SK-N-SH (cell line): ENCODE measurements at regions of chr12 and their contacts with region 1.

Region 1: DNA sequence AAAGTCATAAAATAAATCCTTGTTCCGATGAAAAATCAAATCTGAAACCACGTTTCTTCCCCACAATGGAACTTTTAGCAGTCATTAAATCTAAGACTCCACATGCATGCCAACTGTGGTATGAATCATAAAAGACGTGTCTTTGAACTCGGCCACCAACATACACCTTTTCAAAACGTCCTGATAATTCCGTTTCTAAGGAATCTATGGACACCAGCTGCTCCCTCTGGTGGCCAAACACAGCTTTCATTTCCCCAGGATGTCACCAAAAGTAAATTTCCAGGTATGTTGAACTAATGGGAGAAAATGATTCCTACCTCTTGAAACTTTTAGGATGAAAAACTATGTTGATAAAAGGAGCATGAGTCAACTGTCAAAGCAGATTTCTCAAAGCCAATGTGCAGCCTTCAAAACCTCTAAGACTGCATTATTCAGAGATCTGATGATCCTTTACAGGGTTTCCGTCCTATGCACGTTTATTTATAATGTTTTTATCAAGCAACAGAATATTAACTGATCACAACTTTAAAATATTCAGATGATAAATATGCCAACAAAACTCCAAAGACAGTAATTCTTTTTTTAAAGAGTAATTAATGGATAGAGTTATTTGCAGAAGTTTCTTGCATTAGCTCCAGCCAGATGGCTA is 96.2 kb downstream of the CIT start:
- DNase-seq: peak; percentile 59
- H3K4me3 ChIP-seq: peak overlapping the region in 1 of 2 experiments; percentile 17; a peak in 1 of 4 replicates
- H3K27ac ChIP-seq: no peak overlapping the region
- H3K4me1 ChIP-seq: no peaks in the 10 kb centered on the region
- H3K27me3 ChIP-seq: no peaks in the 10 kb centered on the region
- CTCF ChIP-seq: peak; percentile 93
- EP300 ChIP-seq: no peak
- RAD21 ChIP-seq: peak; percentile 64

Region 2: DNA sequence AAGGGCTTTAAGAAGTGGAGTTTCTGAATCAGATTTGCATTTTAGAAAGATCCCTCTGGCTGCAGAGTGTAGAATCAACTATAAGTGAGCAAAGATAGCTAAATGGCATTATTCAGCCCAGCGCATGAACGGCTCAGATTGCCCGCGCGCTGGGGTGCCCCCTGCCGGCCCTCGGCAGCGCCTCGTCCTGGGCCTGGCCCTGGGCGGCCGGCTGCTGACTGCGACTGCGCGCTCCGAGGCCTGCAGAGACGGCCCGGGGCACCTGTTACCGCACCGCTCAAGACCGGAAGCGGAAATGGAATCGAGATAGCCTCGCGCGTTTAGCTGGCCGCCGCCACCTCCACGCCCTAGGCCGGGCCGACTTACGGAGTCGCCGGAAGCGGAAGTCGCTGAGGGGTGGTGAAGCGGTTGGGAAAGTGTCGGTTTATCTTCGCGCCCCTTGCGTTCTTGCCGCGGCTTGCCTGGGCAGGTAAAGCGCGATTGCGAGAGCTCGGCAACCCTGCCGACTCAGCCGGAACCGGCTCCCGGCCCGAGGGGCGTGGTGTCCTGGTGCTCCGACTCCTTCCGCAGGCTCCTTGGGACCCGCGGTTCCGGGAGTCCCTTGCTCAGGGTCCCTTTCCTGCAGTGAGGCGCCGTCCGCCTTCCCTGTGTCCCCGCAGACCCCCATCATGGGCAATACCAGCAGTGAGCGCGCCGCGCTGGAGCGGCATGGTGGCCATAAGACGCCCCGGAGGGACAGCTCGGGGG is 113.2 kb before region 1 on chr12 and contains the start of gene PRKAB1:
- CTCF ChIA-PET with region 1: interaction called, 16 read pairs
- POLR2A ChIA-PET with region 1: no interaction called
- DNase-seq: peak; percentile 98
- H3K4me3 ChIP-seq: peak within 1 kb of the TSS; percentile 84 to 99
- H3K27ac ChIP-seq: peak within 1 kb of the TSS; percentile 76 to 94
- H3K4me1 ChIP-seq: peaks cover 6 to 7% of the 10 kb centered on the region in 2 experiments; a peak in 3 of 4 replicates
- H3K27me3 ChIP-seq: no peaks in the 10 kb centered on the region
- CTCF ChIP-seq: peak; percentile 94
- EP300 ChIP-seq: no peak; a peak in 1 of 4 replicates
- RAD21 ChIP-seq: peak; percentile 55
- polyA plus RNA-seq, gene PRKAB1: 28.9 and 41.8 TPM in 2 replicates

Region 3: GRCh38 chr12:119749666-119750065 is 31.2 kb before region 1 on chr12:
- CTCF ChIA-PET with region 1: interaction called, 13 read pairs
- POLR2A ChIA-PET with region 1: no interaction called
- DNase-seq: peak; percentile 10
- H3K4me3 ChIP-seq: no peak overlapping the region
- H3K27ac ChIP-seq: peak overlapping the region in 1 of 2 experiments; percentile 34; a peak in 1 of 4 replicates
- H3K4me1 ChIP-seq: peaks cover 0 to 3% of the 10 kb centered on the region in 2 experiments; a peak in 1 of 4 replicates
- H3K27me3 ChIP-seq: no peaks in the 10 kb centered on the region
- CTCF ChIP-seq: no peak
- EP300 ChIP-seq: no peak
- RAD21 ChIP-seq: no peak

Region 4: GRCh38 chr12:119804011-119804641 is 23.2 kb after region 1 on chr12:
- CTCF ChIA-PET with region 1: interaction called, 58 read pairs
- POLR2A ChIA-PET with region 1: no interaction called
- DNase-seq: peak; percentile 86
- H3K4me3 ChIP-seq: peak overlapping the region; percentile 17 to 19; a peak in 2 of 4 replicates
- H3K27ac ChIP-seq: no peak overlapping the region
- H3K4me1 ChIP-seq: peaks cover 7 to 8% of the 10 kb centered on the region in 2 experiments; a peak in 3 of 4 replicates
- H3K27me3 ChIP-seq: no peaks in the 10 kb centered on the region
- CTCF ChIP-seq: peak; percentile 54
- EP300 ChIP-seq: no peak
- RAD21 ChIP-seq: peak; percentile 66

Region 5: DNA sequence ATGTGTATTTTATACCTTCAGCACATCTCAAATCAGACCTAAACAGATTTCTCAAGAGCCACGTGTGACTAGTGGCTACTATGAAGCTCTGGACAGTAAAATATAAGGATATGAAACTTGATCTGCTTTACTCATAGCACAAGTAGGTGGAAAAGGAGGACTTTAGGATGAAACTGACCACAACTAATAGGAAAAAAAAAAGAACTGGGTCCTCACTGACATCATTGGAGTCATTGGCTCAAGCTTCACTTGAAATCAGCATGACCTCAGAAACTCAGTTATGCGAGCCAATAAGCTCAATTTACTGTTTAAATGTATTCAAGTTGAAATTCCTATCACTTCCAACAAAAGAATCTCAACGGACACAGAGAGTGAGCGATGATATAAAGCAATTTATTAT is 130.3 kb after region 1 on chr12:
- CTCF ChIA-PET with region 1: no interaction called
- POLR2A ChIA-PET with region 1: no interaction called
- DNase-seq: no peak
- H3K4me3 ChIP-seq: no peak overlapping the region
- H3K27ac ChIP-seq: no peak overlapping the region
- H3K4me1 ChIP-seq: no peaks in the 10 kb centered on the region
- H3K27me3 ChIP-seq: no peaks in the 10 kb centered on the region
- CTCF ChIP-seq: no peak
- EP300 ChIP-seq: no peak
- RAD21 ChIP-seq: no peak

Region 6: GRCh38 chr12:119964929-119965328 is 184.0 kb after region 1 on chr12:
- CTCF ChIA-PET with region 1: no interaction called
- POLR2A ChIA-PET with region 1: no interaction called
- DNase-seq: no peak
- H3K4me3 ChIP-seq: no peak overlapping the region
- H3K27ac ChIP-seq: no peak overlapping the region
- H3K4me1 ChIP-seq: no peaks in the 10 kb centered on the region
- H3K27me3 ChIP-seq: peaks cover 3% of the 10 kb centered on the region; the same call in 1 of the 2 replicates
- CTCF ChIP-seq: no peak
- EP300 ChIP-seq: no peak
- RAD21 ChIP-seq: no peak